Esophagus muscularis mucosa (tissue), 4 donors: ENCODE measurements at regions of chr4 and their contacts with region 1.

Region 1: DNA sequence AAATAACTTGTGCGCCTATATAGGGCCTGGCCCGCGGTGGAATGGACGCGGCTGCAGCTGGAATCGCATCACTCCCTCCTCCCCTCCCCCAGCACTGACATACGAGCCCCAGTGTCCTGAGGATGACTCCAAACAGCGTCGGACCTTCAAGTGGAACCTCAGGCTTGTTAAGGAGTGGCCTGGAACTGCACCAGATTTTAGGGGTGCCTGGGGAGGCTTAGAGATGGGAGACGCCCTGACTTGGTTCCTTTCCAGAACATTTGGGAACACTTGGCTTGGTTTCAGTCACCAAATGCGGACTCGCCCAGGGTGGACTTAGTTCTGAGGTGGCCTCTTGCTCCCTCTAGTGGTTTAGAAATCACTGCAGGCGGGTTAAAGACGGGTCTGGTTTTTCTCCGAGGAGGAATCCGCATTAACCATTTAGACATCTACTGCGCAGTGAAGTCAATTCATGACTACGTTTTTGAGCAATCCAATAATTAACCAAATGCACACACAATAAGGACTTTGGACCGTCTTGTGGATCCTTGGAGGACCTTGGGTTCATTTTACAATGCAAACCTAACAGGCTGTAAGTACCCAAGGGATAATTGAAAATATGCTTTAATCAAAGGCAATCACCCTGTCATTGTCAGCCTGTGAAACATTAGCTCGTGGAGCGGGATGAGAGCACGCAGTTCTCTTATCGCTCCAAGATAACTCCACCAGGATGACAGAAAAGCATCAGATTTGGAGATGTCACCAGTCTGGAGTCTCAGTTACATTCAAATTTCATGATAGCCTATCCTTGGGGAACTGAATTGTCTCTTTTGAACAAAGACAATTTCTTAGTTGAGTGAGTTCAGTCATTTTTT is 11.2 kb upstream of the PDGFRA start:
- DNase-seq: peak; percentile 94
- H3K4me3 ChIP-seq: peak overlapping the region; percentile 38 to 58 (median 43)
- H3K27ac ChIP-seq: peak overlapping the region in 1 of 4 donors; percentile 22
- H3K4me1 ChIP-seq: peaks cover 7 to 17% (median 12%) of the 10 kb centered on the region in 4 donors
- H3K27me3 ChIP-seq: peaks cover 0 to 51% (median 4%) of the 10 kb centered on the region in 4 donors
- CTCF ChIP-seq: peak; percentile 87 to 95 (median 91)
- EP300 ChIP-seq: no peak
- POLR2A ChIP-seq: no peak

Region 2: GRCh38 chr4:53424280-53424679 is 793.6 kb before region 1 on chr4:
- intact Hi-C with region 1: no loop called
- DNase-seq: no peak
- H3K4me3 ChIP-seq: no peak overlapping the region
- H3K27ac ChIP-seq: no peak overlapping the region
- H3K4me1 ChIP-seq: no peaks in the 10 kb centered on the region
- H3K27me3 ChIP-seq: no peaks in the 10 kb centered on the region
- CTCF ChIP-seq: no peak
- EP300 ChIP-seq: no peak
- POLR2A ChIP-seq: no peak

Region 3: GRCh38 chr4:53908661-53909078 is 309.2 kb before region 1 on chr4:
- intact Hi-C with region 1: loop called (anchors 5 kb)
- DNase-seq: no peak
- H3K4me3 ChIP-seq: peak overlapping the region in 2 of 4 donors; percentile 4 to 38
- H3K27ac ChIP-seq: peak overlapping the region in 2 of 4 donors; percentile 12 to 30
- H3K4me1 ChIP-seq: peaks cover 15 to 21% (median 18%) of the 10 kb centered on the region in 4 donors
- H3K27me3 ChIP-seq: peaks cover 0 to 73% (median 3%) of the 10 kb centered on the region in 4 donors
- CTCF ChIP-seq: peak; percentile 53 to 58 (median 55)
- EP300 ChIP-seq: no peak
- POLR2A ChIP-seq: no peak

Region 4: DNA sequence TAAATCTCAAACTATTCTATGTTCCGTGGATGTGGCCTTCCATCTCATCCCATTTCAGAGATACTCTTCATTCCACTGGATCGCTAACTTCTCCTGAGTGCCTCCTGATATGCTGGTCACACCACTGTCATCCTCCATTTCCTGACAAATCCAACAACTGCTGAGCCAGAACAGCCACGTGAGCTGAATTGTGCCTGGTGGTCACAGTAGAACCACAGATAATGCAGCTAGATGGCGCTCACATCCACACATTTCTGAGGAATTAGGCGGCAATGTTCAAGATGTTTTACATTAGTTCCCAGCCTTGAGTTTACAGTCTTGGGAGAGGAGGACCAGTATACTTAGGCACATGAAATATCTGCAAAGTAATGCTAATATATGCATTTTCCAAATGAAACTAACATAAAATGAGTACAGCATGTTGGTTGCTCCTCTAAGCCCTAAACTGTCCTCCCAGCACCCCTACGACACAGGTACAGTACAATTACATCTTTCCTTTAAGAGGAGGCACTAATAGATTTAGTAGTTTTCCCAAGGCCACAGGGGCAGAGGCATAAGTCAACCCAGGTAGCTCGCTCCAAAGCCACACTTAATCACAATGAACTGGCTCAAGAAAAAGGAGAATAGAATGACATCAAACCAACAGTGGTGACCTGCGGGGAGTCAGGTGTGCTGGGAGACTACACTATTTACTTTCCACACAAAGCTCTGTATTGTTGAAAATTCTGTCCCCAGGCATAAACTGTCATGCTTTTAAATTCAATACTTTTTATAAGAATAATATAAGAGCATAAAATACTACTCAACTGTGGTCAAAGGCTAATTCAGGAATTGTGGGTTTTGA is 287.7 kb before region 1 on chr4:
- intact Hi-C with region 1: loop called (anchors 1 kb)
- DNase-seq: no peak
- H3K4me3 ChIP-seq: no peak overlapping the region
- H3K27ac ChIP-seq: no peak overlapping the region
- H3K4me1 ChIP-seq: peaks cover 0 to 6% (median 2%) of the 10 kb centered on the region in 4 donors
- H3K27me3 ChIP-seq: peaks cover 0 to 59% (median 0%) of the 10 kb centered on the region in 4 donors
- CTCF ChIP-seq: peak; percentile 68 to 76 (median 75)
- EP300 ChIP-seq: no peak
- POLR2A ChIP-seq: no peak

Region 5: GRCh38 chr4:54064295-54065111 is 153.4 kb before region 1 on chr4 and contains the start of gene CHIC2:
- intact Hi-C with region 1: loop called (anchors 5 kb)
- DNase-seq: peak; percentile 98
- H3K4me3 ChIP-seq: peak within 1 kb of the TSS; percentile 77 to 96 (median 95)
- H3K27ac ChIP-seq: peak within 1 kb of the TSS; percentile 87 to 96 (median 90)
- H3K4me1 ChIP-seq: peaks cover 41 to 58% (median 54%) of the 10 kb centered on the region in 4 donors
- H3K27me3 ChIP-seq: no peaks in the 10 kb centered on the region
- CTCF ChIP-seq: no peak
- EP300 ChIP-seq: peak; percentile 57
- POLR2A ChIP-seq: peak; percentile 91
- total RNA-seq, gene CHIC2: 29.8 to 40.4 (median 33.6) TPM

Region 6: GRCh38 chr4:55169352-55169961 is 951.6 kb after region 1 on chr4:
- intact Hi-C with region 1: no loop called
- DNase-seq: no peak
- H3K4me3 ChIP-seq: no peak overlapping the region
- H3K27ac ChIP-seq: no peak overlapping the region
- H3K4me1 ChIP-seq: no peaks in the 10 kb centered on the region
- H3K27me3 ChIP-seq: no peaks in the 10 kb centered on the region
- CTCF ChIP-seq: no peak
- EP300 ChIP-seq: no peak
- POLR2A ChIP-seq: no peak